Activated CD4-positive, alpha-beta memory T cell treated with anti-CD3 and anti-CD28 coated beads for 36 hours (primary cell): ENCODE measurements at regions of chr1 and their contacts with region 1.

Region 1: DNA sequence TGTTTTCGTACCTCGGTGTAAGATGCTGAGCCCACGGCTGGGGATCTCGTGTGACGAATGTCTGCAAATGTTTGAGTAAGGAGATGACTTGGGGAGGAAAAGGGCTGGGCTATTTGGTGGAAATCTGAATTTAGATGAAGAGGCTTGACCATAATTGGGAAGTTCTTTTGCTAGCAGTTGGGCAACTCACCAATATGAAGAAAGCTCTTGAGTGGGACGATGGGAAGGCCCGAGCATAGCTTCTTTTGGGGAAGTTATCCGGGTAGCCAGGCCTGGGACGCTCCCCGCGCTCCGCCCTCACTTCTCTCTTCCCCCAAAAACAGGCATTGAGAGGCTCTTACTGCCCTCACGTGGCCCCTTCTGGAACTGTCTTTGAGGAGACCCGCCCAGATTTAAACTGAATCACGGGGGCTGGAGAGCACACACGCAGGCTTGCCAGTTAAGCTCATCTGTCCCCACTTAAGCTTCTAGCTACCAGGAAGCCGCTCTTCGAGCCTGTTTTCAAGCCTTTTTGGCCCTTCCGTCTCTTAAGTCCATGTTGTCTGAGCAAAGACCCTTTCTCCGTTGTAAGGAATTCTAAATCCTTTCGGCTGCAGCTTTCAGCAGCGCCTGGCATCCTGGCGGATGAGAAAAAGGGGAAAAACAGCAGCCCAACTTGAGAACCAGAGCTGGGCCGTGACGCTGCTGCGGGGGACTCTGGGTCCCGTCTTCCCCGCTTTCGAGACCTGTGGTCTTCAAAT is 93.1 kb downstream of the NID1 start:
- DNase-seq: peak; percentile 92
- H3K4me3 Mint-ChIP-seq: peak overlapping the region; percentile 53
- H3K27ac Mint-ChIP-seq: peak overlapping the region; percentile 53
- H3K4me1 Mint-ChIP-seq: peaks cover 16% of the 10 kb centered on the region
- H3K27me3 Mint-ChIP-seq: no peaks in the 10 kb centered on the region

Region 2: GRCh38 chr1:235675152-235675890 is 296.4 kb before region 1 on chr1:
- CTCF ChIA-PET with region 1: no interaction called
- POLR2A ChIA-PET with region 1: no interaction called
- intact Hi-C with region 1: no loop called
- DNase-seq: no peak
- H3K4me3 Mint-ChIP-seq: no peak overlapping the region
- H3K27ac Mint-ChIP-seq: no peak overlapping the region
- H3K4me1 Mint-ChIP-seq: no peaks in the 10 kb centered on the region
- H3K27me3 Mint-ChIP-seq: no peaks in the 10 kb centered on the region

Region 3: GRCh38 chr1:235734335-235734734 is 237.4 kb before region 1 on chr1:
- CTCF ChIA-PET with region 1: interaction called, 3 read pairs
- POLR2A ChIA-PET with region 1: no interaction called
- intact Hi-C with region 1: loop called (anchors 1 kb)
- DNase-seq: no peak
- H3K4me3 Mint-ChIP-seq: no peak overlapping the region
- H3K27ac Mint-ChIP-seq: no peak overlapping the region
- H3K4me1 Mint-ChIP-seq: peaks cover 5% of the 10 kb centered on the region
- H3K27me3 Mint-ChIP-seq: no peaks in the 10 kb centered on the region

Region 4: DNA sequence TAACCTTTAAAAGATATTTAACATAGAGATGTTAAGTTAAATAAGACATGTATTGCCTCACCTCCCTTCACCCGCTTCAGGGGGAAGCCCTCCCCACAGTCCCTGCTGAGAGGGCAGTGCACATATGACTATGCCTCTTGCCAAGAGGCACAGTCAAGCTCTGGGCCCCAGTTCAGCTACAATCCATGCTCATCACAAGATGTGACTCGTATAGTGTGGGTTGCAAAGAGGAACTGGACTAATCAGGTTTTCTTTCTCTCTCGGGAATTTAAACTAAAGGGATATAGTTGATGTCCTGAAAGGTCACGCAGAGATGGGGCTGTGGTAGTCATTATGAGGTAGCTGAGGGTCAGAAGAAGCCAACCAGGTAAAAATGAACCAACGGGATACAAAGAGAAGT is 140.6 kb before region 1 on chr1:
- CTCF ChIA-PET with region 1: interaction called, 10 read pairs
- POLR2A ChIA-PET with region 1: no interaction called
- intact Hi-C with region 1: no loop called
- DNase-seq: peak; percentile 70
- H3K4me3 Mint-ChIP-seq: no peak overlapping the region
- H3K27ac Mint-ChIP-seq: no peak overlapping the region
- H3K4me1 Mint-ChIP-seq: peaks cover 9% of the 10 kb centered on the region
- H3K27me3 Mint-ChIP-seq: no peaks in the 10 kb centered on the region

Region 5: DNA sequence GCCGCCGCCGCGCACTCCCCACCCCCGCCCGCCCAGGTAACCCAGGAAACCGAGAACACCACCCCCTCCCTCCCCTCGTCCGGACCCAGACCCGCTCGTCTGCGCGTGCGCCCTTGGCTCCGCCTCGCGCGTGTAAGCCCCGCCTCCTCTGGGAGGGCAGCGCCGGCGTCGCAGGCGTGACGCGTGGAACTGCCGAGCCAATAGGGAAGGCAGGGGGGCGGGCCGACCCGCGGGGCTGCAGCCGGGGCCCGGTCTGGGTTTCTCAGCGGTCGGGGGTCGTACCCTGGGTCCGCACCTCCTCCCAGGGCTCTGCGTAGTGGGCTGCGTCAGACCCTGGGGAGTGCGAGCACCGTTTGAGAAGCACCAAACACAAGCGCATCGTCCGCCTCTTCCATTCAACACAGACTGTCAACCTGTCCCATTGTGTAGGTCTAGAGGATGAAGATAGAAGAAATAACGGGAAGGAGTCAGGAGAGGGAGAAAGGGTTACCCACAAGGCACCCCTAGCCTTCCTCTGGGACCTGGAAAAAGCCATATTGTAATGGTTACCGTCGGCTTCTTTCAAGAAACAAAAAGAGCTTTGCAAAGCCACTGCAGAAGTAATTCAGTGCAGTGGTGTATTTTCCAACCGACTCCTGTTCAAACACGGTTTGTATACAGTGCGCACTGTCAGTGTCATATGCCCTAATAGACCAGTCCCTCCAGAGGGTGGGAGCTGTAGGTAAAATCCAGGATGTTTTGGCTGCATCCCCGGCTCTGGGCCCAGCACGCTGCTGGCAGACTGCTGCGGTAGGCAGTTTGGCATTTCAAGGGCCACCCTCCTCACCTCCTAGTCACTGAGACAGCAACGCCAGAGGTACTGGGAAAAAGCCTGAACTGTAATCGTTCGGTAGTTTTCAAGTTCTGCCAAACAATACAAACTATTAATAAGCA is 104.6 kb before region 1 on chr1:
- CTCF ChIA-PET with region 1: interaction called, 54 read pairs
- POLR2A ChIA-PET with region 1: interaction called, 7 read pairs
- intact Hi-C with region 1: loop called (anchors 1 kb)
- DNase-seq: peak; percentile 98
- H3K4me3 Mint-ChIP-seq: peak overlapping the region; percentile 89
- H3K27ac Mint-ChIP-seq: peak overlapping the region; percentile 98
- H3K4me1 Mint-ChIP-seq: peaks cover 45% of the 10 kb centered on the region
- H3K27me3 Mint-ChIP-seq: no peaks in the 10 kb centered on the region

Region 6: DNA sequence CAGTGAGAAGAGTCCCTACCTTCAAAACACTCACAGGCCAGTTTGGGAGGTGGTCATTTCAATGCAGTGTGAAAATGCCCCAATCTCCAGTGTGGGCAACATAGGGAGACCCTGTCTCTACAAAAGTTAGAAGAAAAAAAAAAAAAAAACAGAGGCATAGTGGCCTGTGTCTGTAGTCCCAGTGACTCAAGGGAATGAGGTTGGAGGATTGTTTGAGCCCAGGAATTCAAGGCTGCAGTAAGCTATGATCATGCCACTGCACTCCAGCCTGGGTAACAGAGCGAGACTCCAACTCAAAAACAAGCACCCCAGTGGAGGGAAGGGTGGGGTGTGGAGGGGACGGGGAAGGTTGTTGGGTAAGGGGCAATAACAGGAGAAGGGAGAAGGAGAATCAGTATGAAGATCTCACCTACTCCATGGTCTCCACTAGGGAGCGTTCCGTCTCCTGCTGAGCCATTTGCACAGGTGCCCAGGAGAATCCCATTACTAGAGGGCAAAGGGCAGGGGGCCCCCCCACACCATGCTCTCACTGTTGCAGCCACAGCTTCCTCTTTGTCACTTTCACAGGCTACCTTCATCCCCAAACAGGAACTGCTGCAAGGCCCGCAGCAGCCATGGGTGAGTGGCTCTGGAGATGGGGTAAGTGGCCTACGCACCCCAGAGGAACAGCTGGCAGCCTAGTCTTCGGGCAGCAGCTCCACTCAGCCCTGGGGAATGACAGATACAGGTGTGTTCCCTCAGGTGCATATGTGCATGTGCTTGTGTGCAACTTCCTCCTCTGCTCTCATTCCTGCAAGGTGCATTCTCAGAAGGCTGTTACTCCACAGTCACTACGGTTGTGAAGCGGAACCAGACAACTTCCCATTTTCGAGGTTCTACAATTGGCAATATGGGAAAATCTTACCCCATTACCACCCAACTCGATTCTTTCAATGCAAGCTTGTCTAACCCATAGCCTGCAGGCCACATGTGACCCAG is 17.1 kb before region 1 on chr1:
- CTCF ChIA-PET with region 1: interaction called, 21 read pairs
- POLR2A ChIA-PET with region 1: no interaction called
- intact Hi-C with region 1: no loop called
- DNase-seq: peak; percentile 67
- H3K4me3 Mint-ChIP-seq: no peak overlapping the region
- H3K27ac Mint-ChIP-seq: no peak overlapping the region
- H3K4me1 Mint-ChIP-seq: peaks cover 33% of the 10 kb centered on the region
- H3K27me3 Mint-ChIP-seq: no peaks in the 10 kb centered on the region

Region 7: DNA sequence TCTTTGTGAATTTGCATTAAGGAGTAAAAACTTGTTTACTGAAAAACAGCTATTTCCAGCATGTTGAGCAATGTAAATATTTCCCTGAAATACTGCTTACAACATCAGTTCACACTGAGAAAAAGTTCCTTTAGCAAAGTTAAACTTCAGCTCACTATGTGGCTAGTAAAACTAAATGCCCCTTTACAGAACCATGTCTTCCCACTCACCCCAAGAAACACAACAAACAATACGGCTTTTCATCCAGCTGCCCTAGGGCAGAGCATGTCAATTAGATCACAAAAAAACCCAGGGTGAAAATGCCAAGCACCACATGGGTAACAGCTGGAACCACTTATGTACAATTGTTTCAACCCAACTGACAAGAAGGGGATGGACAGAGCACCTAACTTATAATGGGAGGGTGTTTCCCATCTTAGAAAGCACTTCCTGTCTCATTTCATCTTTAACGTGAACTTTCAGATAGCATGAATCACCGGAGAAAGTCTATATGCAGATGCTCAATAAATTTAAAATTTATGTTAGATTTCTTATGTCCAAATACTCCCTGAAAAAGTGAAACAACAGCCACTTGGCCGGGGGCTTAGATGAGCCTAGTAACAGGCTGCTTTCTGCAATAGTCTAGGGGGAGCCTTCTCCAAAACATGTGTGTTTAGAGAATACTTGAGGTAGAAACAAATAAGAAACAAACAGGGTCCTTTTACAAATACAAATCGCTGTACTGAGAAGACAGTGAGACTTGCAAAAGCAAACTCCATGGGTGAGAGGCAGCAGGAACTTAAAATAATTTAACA is 86.6 kb after region 1 on chr1:
- CTCF ChIA-PET with region 1: no interaction called
- POLR2A ChIA-PET with region 1: no interaction called
- intact Hi-C with region 1: no loop called
- DNase-seq: no peak
- H3K4me3 Mint-ChIP-seq: no peak overlapping the region
- H3K27ac Mint-ChIP-seq: no peak overlapping the region
- H3K4me1 Mint-ChIP-seq: peaks cover 8% of the 10 kb centered on the region
- H3K27me3 Mint-ChIP-seq: peaks cover 10% of the 10 kb centered on the region

Region 8: DNA sequence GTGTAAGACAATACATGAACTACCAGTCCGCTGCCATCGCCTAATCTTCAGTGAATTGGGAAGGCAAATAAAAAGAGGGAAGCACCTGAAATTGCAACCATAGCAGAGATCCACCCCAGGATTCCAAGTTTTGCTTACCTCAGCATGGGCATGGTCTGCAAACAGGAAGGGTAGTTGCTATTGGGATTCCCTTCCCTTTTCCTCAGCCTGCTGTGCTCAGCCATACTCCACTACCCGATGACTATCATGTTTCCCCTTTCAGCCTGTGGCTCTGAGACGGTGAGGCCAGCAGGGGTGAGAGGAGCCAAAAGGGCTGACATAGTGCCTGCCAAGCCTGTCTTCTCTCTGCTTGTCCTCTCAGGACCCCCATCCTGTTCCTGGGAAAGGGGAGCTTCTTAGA is 234.8 kb after region 1 on chr1:
- CTCF ChIA-PET with region 1: no interaction called
- POLR2A ChIA-PET with region 1: no interaction called
- intact Hi-C with region 1: no loop called
- DNase-seq: no peak
- H3K4me3 Mint-ChIP-seq: no peak overlapping the region
- H3K27ac Mint-ChIP-seq: no peak overlapping the region
- H3K4me1 Mint-ChIP-seq: no peaks in the 10 kb centered on the region
- H3K27me3 Mint-ChIP-seq: no peaks in the 10 kb centered on the region